Upper lobe of right lung (tissue), 1 donor: ENCODE measurements at regions of chr6 and their contacts with region 1.

Region 1: DNA sequence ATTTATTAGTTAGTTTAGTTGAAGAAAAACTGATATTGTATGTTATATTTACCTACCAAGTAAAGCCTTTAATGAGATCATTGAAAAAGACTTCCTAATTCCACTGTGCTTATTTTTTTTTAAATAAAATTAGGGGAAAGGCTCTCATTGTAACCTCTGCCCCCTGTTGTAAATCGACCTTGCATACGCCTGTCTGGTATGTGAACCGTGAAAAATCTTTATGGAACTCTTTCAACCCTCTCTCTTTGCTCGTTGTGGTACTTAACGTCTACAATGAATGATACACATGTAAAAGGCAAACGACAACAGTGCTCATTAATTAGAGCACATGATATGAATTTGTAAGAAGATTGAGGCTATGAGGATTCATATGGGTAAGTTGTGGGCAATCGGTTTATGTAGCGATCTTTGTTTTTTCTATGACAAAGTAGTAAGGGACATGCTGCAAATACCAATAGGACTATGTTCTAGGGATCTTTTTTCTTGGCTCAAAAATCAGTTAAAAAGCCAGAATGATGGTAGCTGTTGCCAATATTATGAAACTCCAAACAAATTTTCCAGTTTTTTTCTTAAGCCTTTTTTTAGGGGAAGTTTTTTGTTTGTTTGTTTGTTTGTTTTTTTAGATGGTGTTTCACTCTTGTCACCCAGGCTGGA is 119.0 kb upstream of the MCHR2 start:
- DNase-seq: no peak
- ATAC-seq: no peak
- H3K4me3 ChIP-seq: no peak overlapping the region
- H3K27ac ChIP-seq: no peak overlapping the region
- H3K4me1 ChIP-seq: no peaks in the 10 kb centered on the region
- H3K27me3 ChIP-seq: peaks cover 13% of the 10 kb centered on the region
- CTCF ChIP-seq: no peak

Region 2: GRCh38 chr6:100185615-100186014 is 72.6 kb after region 1 on chr6:
- intact Hi-C with region 1: no loop called
- DNase-seq: no peak
- ATAC-seq: no peak
- H3K4me3 ChIP-seq: no peak overlapping the region
- H3K27ac ChIP-seq: no peak overlapping the region
- H3K4me1 ChIP-seq: no peaks in the 10 kb centered on the region
- H3K27me3 ChIP-seq: peaks cover 5% of the 10 kb centered on the region
- CTCF ChIP-seq: no peak

Region 3: DNA sequence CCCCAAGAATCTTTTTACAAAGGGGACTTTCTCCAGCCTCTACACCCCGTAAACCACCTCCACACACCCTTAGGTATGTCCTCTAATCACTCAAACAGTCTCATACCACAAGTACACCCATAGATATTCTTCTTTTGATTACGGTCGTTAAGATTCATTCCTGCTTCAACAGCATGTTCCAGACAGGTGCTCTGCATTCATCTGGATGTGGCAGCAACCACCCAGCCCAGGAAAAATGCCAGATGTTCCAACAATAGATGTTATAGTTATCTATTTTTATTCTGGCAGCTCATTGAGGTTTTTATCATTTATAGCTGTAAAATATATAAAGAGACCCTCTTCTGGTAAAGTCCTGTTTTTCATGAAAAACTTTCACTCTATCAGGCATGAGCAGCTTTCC is 291.1 kb after region 1 on chr6:
- intact Hi-C with region 1: no loop called
- DNase-seq: no peak
- ATAC-seq: no peak
- H3K4me3 ChIP-seq: no peak overlapping the region
- H3K27ac ChIP-seq: no peak overlapping the region
- H3K4me1 ChIP-seq: no peaks in the 10 kb centered on the region
- H3K27me3 ChIP-seq: no peaks in the 10 kb centered on the region
- CTCF ChIP-seq: no peak

Region 4: DNA sequence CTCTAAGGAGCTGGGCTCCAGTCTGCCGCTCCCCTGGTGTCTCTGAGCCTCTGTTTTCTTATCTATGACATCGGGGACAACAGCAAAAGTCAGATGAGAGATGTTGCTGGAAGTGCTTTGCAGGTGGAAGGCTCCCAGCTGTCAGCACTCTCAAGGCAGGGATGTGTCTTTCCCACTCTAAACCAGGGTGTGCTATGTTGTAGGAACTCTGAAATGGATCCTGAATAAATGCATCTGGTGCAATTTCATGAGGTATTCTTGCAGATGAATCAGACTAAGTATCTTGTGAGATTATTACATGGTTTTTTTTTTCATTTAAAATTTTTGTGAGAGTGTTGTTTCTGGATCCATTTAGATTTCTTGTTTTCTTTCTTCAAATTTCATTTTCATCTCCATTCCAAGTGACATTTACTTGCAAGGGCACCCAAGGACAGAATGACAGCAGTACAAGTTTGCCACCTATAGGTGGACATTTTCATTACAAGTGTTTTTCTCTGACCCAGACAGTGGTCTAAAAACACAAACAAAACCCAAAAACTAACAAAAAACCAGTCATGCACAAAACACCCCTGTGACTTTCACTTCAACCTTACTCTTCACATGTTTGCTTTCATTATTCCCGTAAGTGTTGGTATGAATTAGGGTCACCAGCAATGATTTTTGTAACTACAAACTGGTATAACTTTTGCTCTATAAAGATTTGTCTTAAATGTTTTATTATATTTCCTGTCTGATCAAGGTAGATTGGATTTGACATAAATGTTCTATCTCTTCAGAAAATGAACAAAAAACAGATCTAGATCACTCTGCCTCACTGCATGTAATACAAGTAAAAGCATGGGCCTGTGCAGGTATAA is 366.4 kb after region 1 on chr6:
- intact Hi-C with region 1: loop called (anchors 5 kb)
- DNase-seq: no peak
- ATAC-seq: peak; percentile 54
- H3K4me3 ChIP-seq: no peak overlapping the region
- H3K27ac ChIP-seq: no peak overlapping the region
- H3K4me1 ChIP-seq: no peaks in the 10 kb centered on the region
- H3K27me3 ChIP-seq: peaks cover 18% of the 10 kb centered on the region
- CTCF ChIP-seq: peak; percentile 65